Activated CD4-positive, alpha-beta T cell treated with anti-CD3 and anti-CD28 coated beads, Interleukin-2, amount 10 ng/mL, durations not matched to agents 24 days and 14 days (primary cell): ENCODE measurements at regions of chr1 and their contacts with region 1.

Region 1: DNA sequence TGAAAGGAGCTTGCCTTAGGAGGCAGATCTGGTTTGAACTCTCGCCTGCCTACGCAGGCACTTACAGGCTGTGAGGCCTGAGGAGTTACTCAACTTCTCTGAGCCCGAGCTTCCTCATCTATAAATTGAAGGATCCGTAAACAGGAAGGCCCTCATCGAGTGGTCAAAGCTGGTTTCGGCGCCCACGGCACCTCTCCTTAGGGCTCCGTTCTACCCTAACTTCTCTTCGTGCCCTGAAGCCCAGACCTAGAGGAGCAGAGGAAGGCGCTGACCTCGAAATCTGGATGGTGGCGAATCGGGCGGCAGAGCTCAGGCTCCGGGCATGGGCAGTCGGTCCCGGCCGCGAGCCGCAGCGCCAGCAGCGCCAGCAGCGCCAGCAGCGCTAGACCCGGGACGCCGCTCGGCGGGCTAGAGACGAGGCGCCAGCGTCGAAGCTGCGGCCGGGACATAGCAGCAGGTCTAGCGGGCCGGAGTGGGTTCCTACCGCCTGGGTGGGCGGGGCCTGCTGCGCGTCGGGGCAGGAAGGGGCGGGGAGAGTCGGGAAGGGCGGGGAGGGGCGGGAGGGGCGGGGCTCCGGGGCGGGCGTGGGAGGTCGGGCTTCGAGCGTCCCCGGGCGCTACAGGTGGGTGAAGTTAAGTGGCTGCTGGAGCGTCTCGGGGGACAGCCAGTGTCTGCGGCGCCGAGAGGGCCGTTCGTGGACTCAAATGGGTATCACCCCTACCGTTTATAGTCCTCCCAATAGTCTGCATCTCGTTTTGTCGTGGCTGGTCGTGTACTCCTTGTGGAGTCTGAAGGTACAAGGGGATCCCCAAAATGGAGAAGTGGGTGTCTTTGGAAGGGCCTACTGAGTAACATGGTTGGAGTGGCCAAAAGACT is at the start of gene CTBS:
- DNase-seq: peak; percentile 95
- H3K4me3 Mint-ChIP-seq: peak within 1 kb of the TSS; percentile 99
- H3K27ac Mint-ChIP-seq: peak within 1 kb of the TSS; percentile 100
- H3K4me1 Mint-ChIP-seq: peaks cover 41% of the 10 kb centered on the region
- H3K27me3 Mint-ChIP-seq: no peaks in the 10 kb centered on the region
- total RNA-seq, gene CTBS: 13.1 and 13.9 TPM in 2 replicates

Region 2: DNA sequence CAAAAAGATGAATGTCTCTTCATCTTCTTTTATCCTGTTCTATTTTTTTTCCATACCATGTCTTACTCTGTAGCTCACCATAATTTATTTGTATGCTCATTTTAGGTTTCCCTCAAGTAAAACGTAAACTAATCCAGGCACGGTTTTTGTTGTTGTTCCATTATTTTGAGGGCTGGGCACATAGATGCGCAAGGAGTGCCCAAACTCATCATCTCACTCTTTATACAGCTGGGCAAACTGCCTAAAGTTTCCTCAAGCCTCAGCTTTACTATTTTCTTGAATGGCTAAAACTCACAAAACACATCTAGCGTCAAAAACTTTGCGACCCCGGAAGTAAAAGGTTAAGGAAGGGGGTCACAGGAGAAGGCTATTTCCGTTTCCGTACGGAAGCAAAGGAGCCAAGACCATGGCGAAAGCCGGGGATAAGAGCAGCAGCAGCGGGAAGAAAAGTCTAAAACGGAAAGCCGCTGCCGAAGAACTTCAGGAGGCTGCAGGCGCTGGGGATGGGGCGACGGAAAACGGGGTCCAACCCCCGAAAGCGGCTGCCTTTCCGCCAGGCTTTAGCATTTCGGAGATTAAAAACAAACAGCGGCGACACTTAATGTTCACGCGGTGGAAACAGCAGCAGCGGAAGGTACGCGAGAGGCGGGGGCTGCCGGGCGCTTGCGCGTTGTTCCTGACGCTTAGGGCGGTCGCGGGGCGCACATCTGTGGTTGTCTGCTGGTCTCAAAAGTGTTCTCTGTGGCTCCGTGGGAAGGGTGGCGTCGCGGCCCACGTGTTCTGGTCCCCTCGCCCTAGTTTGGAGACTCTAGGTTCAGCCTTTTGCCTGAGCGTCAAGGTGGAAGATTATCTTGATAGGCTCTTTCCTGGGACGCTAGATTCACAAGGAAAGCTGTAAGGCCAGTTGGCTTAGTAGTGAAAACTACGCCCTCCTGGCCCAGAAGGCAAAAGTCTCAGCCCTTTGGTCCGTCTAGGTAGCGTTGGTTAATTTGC is 95.0 kb before region 1 on chr1 and contains the start of gene RPF1:
- intact Hi-C with region 1: loop called (anchors 1 kb)
- DNase-seq: peak; percentile 93
- H3K4me3 Mint-ChIP-seq: peak within 1 kb of the TSS; percentile 96
- H3K27ac Mint-ChIP-seq: peak within 1 kb of the TSS; percentile 97
- H3K4me1 Mint-ChIP-seq: peaks cover 26% of the 10 kb centered on the region
- H3K27me3 Mint-ChIP-seq: peaks cover 20% of the 10 kb centered on the region
- total RNA-seq, gene RPF1: 63.3 and 64.4 TPM in 2 replicates

Region 3: GRCh38 chr1:84598846-84599741 is 24.9 kb after region 1 on chr1:
- intact Hi-C with region 1: loop called (anchors 1 kb)
- DNase-seq: no peak
- H3K4me3 Mint-ChIP-seq: peak overlapping the region; percentile 51
- H3K27ac Mint-ChIP-seq: peak overlapping the region; percentile 88
- H3K4me1 Mint-ChIP-seq: peaks cover 19% of the 10 kb centered on the region
- H3K27me3 Mint-ChIP-seq: peaks cover 4% of the 10 kb centered on the region

Region 4: GRCh38 chr1:84853741-84854721 is 279.8 kb after region 1 on chr1:
- intact Hi-C with region 1: loop called (anchors 5 kb)
- DNase-seq: peak; percentile 88
- H3K4me3 Mint-ChIP-seq: peak overlapping the region; percentile 64
- H3K27ac Mint-ChIP-seq: peak overlapping the region; percentile 74
- H3K4me1 Mint-ChIP-seq: peaks cover 41% of the 10 kb centered on the region
- H3K27me3 Mint-ChIP-seq: no peaks in the 10 kb centered on the region

Region 5: GRCh38 chr1:85884372-85885035 is 1310.3 kb after region 1 on chr1:
- intact Hi-C with region 1: no loop called
- DNase-seq: no peak
- H3K4me3 Mint-ChIP-seq: no peak overlapping the region
- H3K27ac Mint-ChIP-seq: no peak overlapping the region
- H3K4me1 Mint-ChIP-seq: no peaks in the 10 kb centered on the region
- H3K27me3 Mint-ChIP-seq: no peaks in the 10 kb centered on the region